ENCODE measurements at regions of chr16 and their contacts with region 1.

Region 1: DNA sequence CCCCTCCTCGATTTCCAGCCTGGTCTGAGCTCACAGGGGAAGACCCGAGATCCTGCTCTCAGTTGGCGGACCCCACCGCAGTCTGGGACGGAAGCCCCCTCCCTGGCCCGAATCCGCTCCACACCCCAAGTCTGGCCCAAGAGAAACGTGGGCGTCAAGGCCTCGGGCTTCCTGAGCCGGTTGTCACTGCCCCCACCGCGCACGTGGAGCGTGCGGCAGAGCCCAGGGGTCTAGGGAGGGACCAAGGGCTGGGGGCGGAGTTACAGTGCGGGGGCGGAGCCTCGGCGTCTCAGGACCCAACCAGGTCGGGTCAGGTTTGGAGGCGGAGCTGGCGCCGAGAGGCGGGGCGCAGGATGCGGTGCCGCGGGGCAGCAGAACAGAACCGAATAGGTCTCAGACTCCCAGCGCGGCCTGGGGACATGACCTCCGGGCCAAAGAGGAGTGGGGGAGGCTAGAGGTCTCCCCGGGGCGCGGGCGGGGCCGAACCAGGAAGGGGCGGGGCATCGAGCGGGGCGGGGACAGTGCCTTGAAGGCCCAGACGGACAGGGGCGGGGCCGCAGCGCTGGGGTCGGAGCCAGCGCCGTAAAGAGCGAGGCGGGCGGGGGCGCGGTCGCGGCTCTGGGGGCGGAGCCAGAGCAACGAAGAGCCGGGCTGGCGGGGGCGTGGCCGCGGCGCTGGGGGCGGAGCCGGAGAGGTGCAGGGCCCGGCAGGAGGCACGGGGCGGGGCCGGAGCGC is 431 bp upstream of the ZFPM1 start:
- DNase-seq: peak; percentile 97 to 100 (median 99)
- ATAC-seq: peak; percentile 72
- H3K4me3 ChIP-seq: peak overlapping the region; percentile 52 to 59
- H3K4me3 Mint-ChIP-seq: peak overlapping the region; percentile 85
- H3K27ac ChIP-seq: peak overlapping the region; percentile 55 to 80
- H3K27ac Mint-ChIP-seq: peak overlapping the region; percentile 88
- H3K4me1 ChIP-seq: peaks cover 33% of the 10 kb centered on the region
- H3K4me1 Mint-ChIP-seq: peaks cover 32% of the 10 kb centered on the region
- H3K27me3 ChIP-seq: no peaks in the 10 kb centered on the region
- H3K27me3 Mint-ChIP-seq: no peaks in the 10 kb centered on the region
- CTCF ChIP-seq: no peak

Region 2: GRCh38 chr16:88437373-88437964 is 15.2 kb before region 1 on chr16:
- CTCF ChIA-PET with region 1: interaction called, 20 read pairs
- POLR2A ChIA-PET with region 1: no interaction called
- intact Hi-C with region 1: no loop called
- DNase-seq: peak in 8 of 9 experiments; percentile 50 to 79 (median 70)
- ATAC-seq: peak; percentile 94
- H3K4me3 ChIP-seq: no peak overlapping the region
- H3K4me3 Mint-ChIP-seq: no peak overlapping the region
- H3K27ac ChIP-seq: no peak overlapping the region
- H3K27ac Mint-ChIP-seq: no peak overlapping the region
- H3K4me1 ChIP-seq: no peaks in the 10 kb centered on the region
- H3K4me1 Mint-ChIP-seq: no peaks in the 10 kb centered on the region
- H3K27me3 ChIP-seq: no peaks in the 10 kb centered on the region
- H3K27me3 Mint-ChIP-seq: no peaks in the 10 kb centered on the region
- CTCF ChIP-seq: peak; percentile 73

Region 3: DNA sequence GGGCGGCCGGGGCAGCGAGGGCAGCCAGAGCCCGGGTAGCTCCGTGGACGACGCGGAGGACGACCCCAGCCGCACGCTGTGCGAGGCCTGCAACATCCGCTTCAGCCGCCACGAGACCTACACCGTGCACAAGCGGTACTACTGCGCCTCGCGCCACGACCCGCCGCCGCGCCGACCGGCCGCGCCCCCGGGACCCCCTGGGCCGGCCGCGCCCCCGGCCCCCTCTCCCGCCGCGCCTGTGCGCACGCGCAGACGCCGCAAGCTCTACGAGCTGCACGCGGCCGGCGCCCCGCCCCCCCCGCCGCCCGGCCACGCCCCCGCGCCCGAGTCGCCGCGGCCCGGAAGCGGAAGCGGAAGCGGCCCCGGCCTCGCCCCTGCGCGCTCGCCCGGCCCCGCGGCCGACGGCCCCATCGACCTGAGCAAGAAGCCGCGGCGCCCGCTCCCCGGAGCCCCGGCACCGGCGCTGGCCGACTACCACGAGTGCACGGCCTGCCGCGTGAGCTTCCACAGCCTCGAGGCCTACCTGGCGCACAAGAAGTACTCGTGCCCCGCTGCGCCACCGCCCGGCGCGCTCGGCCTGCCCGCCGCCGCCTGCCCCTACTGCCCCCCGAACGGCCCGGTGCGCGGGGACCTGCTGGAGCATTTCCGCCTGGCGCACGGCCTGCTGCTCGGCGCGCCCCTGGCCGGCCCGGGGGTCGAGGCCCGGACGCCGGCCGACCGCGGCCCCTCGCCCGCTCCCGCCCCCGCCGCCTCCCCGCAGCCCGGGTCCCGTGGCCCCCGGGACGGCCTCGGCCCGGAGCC is 81.5 kb after region 1 on chr16:
- CTCF ChIA-PET with region 1: interaction called, 4 read pairs
- POLR2A ChIA-PET with region 1: interaction called, 4 read pairs
- intact Hi-C with region 1: loop called (anchors 1 to 2 kb)
- DNase-seq: peak; percentile 59 to 92 (median 76)
- ATAC-seq: peak; percentile 70
- H3K4me3 ChIP-seq: peak overlapping the region; percentile 15 to 57
- H3K4me3 Mint-ChIP-seq: peak overlapping the region; percentile 64
- H3K27ac ChIP-seq: peak overlapping the region in 1 of 2 experiments; percentile 58
- H3K27ac Mint-ChIP-seq: no peak overlapping the region
- H3K4me1 ChIP-seq: peaks cover 8% of the 10 kb centered on the region
- H3K4me1 Mint-ChIP-seq: peaks cover 15% of the 10 kb centered on the region
- H3K27me3 ChIP-seq: no peaks in the 10 kb centered on the region
- H3K27me3 Mint-ChIP-seq: no peaks in the 10 kb centered on the region
- CTCF ChIP-seq: no peak

Region 4: GRCh38 chr16:88706288-88706964 is 253.8 kb after region 1 on chr16 and contains the starts of genes CTU2 and RNF166:
- CTCF ChIA-PET with region 1: no interaction called
- POLR2A ChIA-PET with region 1: no interaction called
- intact Hi-C with region 1: loop called (anchors 2 to 5 kb)
- DNase-seq: peak; percentile 79 to 97 (median 91)
- ATAC-seq: peak; percentile 55
- H3K4me3 ChIP-seq: peak within 1 kb of the TSS; percentile 80 to 89
- H3K4me3 Mint-ChIP-seq: peak within 1 kb of the TSS; percentile 90
- H3K27ac ChIP-seq: peak within 1 kb of the TSS; percentile 88 to 91
- H3K27ac Mint-ChIP-seq: peak within 1 kb of the TSS; percentile 98
- H3K4me1 ChIP-seq: peaks cover 30% of the 10 kb centered on the region
- H3K4me1 Mint-ChIP-seq: peaks cover 44% of the 10 kb centered on the region
- H3K27me3 ChIP-seq: no peaks in the 10 kb centered on the region
- H3K27me3 Mint-ChIP-seq: no peaks in the 10 kb centered on the region
- CTCF ChIP-seq: no peak
- total RNA-seq, gene CTU2: 59.5 to 60.4 TPM
- total RNA-seq, gene RNF166: 371 to 406 TPM

Region 5: DNA sequence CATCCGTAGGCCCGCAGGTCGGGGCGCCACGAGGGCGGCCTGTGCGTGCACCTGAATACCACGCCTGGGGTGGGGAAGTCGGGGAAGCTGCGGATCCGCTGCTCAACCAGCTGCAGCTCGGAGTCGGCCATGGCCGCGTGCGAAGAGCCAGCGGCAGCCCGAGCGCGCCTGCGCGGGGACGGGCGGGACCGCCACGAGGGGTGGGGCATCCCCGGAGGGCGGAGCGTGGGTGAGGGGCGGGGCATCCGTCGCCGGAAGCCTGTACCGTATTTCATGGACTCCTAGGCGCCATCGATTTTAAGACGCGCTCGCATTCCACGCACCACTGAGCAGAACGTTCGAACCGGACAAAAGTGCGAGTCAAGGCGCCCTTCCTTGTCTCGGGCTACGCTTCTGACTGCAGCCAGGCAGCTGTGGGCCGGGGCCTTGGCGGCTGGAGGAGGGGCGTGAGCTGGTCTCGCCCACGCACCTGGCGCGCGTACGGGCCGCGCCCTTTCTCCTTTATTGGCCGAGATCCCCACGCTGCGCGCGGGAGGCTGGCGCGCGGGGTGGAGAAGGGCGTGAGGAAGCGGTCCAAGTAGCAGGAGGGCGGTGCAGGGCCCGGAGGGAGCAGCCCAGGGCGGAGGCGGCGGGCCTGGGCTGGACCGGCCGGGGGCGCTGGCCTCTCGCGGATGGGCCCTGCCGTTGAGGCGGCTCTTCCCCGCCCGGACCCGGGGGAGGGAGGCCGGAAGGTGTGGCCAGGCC is 359.3 kb after region 1 on chr16 and contains the start of gene APRT:
- CTCF ChIA-PET with region 1: no interaction called
- POLR2A ChIA-PET with region 1: no interaction called
- intact Hi-C with region 1: loop called (anchors 5 to 10 kb)
- DNase-seq: peak; percentile 93 to 99 (median 97)
- ATAC-seq: peak; percentile 90
- H3K4me3 ChIP-seq: peak within 1 kb of the TSS; percentile 75 to 99
- H3K4me3 Mint-ChIP-seq: peak within 1 kb of the TSS; percentile 97
- H3K27ac ChIP-seq: peak within 1 kb of the TSS; percentile 71 to 87
- H3K27ac Mint-ChIP-seq: peak within 1 kb of the TSS; percentile 97
- H3K4me1 ChIP-seq: peaks cover 21% of the 10 kb centered on the region
- H3K4me1 Mint-ChIP-seq: peaks cover 19% of the 10 kb centered on the region
- H3K27me3 ChIP-seq: no peaks in the 10 kb centered on the region
- H3K27me3 Mint-ChIP-seq: no peaks in the 10 kb centered on the region
- CTCF ChIP-seq: no peak
- total RNA-seq, gene APRT: 171 to 178 TPM

Measured in CD8-positive, alpha-beta T cell (primary cell).